Activated T-helper 1 cell treated with anti-CD3 and anti-CD28 coated beads, Interleukin-12 subunit alpha, Interleukin-12 subunit beta, Interleukin-2, Interleukin-4 antibody, amounts not matched to agents 30 ng/mL and 10 ng/mL and 1 ng/mL, durations not matched to agents 14 hours and 24 hours and 36 hours (primary cell): ENCODE measurements at regions of chr1 and their contacts with region 1.

Region 1: DNA sequence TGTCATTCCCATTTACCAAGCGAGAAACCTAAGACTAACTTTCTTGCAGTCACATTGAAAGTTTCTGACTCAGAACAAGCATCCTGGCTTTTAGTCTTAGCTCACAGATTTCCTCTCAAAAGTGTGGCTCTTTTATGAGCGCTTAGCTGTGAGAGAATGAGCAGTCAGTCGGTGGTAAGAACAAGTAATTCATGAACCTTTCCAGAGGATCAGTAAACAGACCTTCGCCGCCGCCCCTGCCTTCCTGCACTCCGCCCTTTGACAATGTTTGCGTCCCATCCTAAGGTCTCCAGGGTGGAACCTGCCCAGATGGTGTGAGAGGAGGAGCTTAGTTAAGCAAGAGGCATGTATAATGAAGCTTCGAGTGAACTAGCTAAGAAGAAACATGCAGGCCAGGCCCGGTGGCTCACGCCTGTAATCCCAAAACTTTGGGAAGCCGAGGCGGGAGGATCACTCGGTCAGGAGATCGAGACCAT is 142.4 kb downstream of the GLUL start:
- DNase-seq: peak; percentile 53
- H3K4me3 Mint-ChIP-seq: no peak overlapping the region
- H3K27ac Mint-ChIP-seq: peak overlapping the region; percentile 86
- H3K4me1 Mint-ChIP-seq: peaks cover 29% of the 10 kb centered on the region
- H3K27me3 Mint-ChIP-seq: no peaks in the 10 kb centered on the region

Region 2: GRCh38 chr1:181397845-181398244 is 851.4 kb before region 1 on chr1:
- intact Hi-C with region 1: loop called (anchors 2 kb)
- DNase-seq: peak; percentile 12
- H3K4me3 Mint-ChIP-seq: peak overlapping the region; percentile 58
- H3K27ac Mint-ChIP-seq: peak overlapping the region; percentile 42
- H3K4me1 Mint-ChIP-seq: peaks cover 33% of the 10 kb centered on the region
- H3K27me3 Mint-ChIP-seq: no peaks in the 10 kb centered on the region

Region 3: GRCh38 chr1:182149411-182149965 is 99.8 kb before region 1 on chr1:
- intact Hi-C with region 1: loop called (anchors 1 kb)
- DNase-seq: peak; percentile 60
- H3K4me3 Mint-ChIP-seq: peak overlapping the region; percentile 65
- H3K27ac Mint-ChIP-seq: peak overlapping the region; percentile 88
- H3K4me1 Mint-ChIP-seq: peaks cover 51% of the 10 kb centered on the region
- H3K27me3 Mint-ChIP-seq: no peaks in the 10 kb centered on the region

Region 4: GRCh38 chr1:182215764-182216163 is 33.5 kb before region 1 on chr1:
- intact Hi-C with region 1: no loop called
- DNase-seq: no peak
- H3K4me3 Mint-ChIP-seq: no peak overlapping the region
- H3K27ac Mint-ChIP-seq: no peak overlapping the region
- H3K4me1 Mint-ChIP-seq: no peaks in the 10 kb centered on the region
- H3K27me3 Mint-ChIP-seq: peaks cover 7% of the 10 kb centered on the region

Region 5: GRCh38 chr1:182391362-182392044 is 142.3 kb after region 1 on chr1 and contains the start of gene GLUL:
- intact Hi-C with region 1: loop called (anchors 1 kb)
- DNase-seq: peak; percentile 82
- H3K4me3 Mint-ChIP-seq: peak within 1 kb of the TSS; percentile 99
- H3K27ac Mint-ChIP-seq: peak within 1 kb of the TSS; percentile 90
- H3K4me1 Mint-ChIP-seq: peaks cover 46% of the 10 kb centered on the region
- H3K27me3 Mint-ChIP-seq: peaks cover 12% of the 10 kb centered on the region
- total RNA-seq, gene GLUL: 89.6 and 101 TPM in 2 replicates

Region 6: GRCh38 chr1:182707122-182707521 is 457.9 kb after region 1 on chr1:
- intact Hi-C with region 1: loop called (anchors 1 kb)
- DNase-seq: no peak
- H3K4me3 Mint-ChIP-seq: no peak overlapping the region
- H3K27ac Mint-ChIP-seq: no peak overlapping the region
- H3K4me1 Mint-ChIP-seq: peaks cover 28% of the 10 kb centered on the region
- H3K27me3 Mint-ChIP-seq: peaks cover 2% of the 10 kb centered on the region

Region 7: GRCh38 chr1:183635606-183636333 is 1386.5 kb after region 1 on chr1 and contains the start of gene ARPC5:
- intact Hi-C with region 1: loop called (anchors 10 kb)
- DNase-seq: peak; percentile 96
- H3K4me3 Mint-ChIP-seq: peak within 1 kb of the TSS; percentile 100
- H3K27ac Mint-ChIP-seq: peak within 1 kb of the TSS; percentile 100
- H3K4me1 Mint-ChIP-seq: peaks cover 46% of the 10 kb centered on the region
- H3K27me3 Mint-ChIP-seq: peaks cover 4% of the 10 kb centered on the region
- total RNA-seq, gene ARPC5: 146 and 154 TPM in 2 replicates